Activated B cell treated with CpG ODN at 0.5 μM for 24 hours (primary cell): ENCODE measurements at regions of chr3 and their contacts with region 1.

Region 1: GRCh38 chr3:196287440-196288148 is at the start of gene PCYT1A:
- DNase-seq: peak; percentile 68
- ATAC-seq: peak; percentile 78
- H3K4me3 Mint-ChIP-seq: peak within 1 kb of the TSS; percentile 98
- H3K27ac Mint-ChIP-seq: peak within 1 kb of the TSS; percentile 97
- H3K4me1 Mint-ChIP-seq: peaks cover 66% of the 10 kb centered on the region
- H3K27me3 Mint-ChIP-seq: no peaks in the 10 kb centered on the region
- CTCF ChIP-seq: no peak
- total RNA-seq, gene PCYT1A: 54.6 and 58.8 TPM in 2 replicates

Region 2: GRCh38 chr3:194617827-194618226 is 1669.8 kb before region 1 on chr3:
- CTCF ChIA-PET with region 1: no interaction called
- POLR2A ChIA-PET with region 1: no interaction called
- intact Hi-C with region 1: no loop called
- DNase-seq: no peak
- ATAC-seq: peak; percentile 31
- H3K4me3 Mint-ChIP-seq: no peak overlapping the region
- H3K27ac Mint-ChIP-seq: peak overlapping the region; percentile 12
- H3K4me1 Mint-ChIP-seq: no peaks in the 10 kb centered on the region
- H3K27me3 Mint-ChIP-seq: no peaks in the 10 kb centered on the region
- CTCF ChIP-seq: no peak

Region 3: GRCh38 chr3:196432137-196432879 is 144.7 kb after region 1 on chr3 and contains the start of gene UBXN7:
- CTCF ChIA-PET with region 1: no interaction called
- POLR2A ChIA-PET with region 1: no interaction called
- intact Hi-C with region 1: loop called (anchors 1 kb)
- DNase-seq: peak; percentile 92
- ATAC-seq: peak; percentile 81
- H3K4me3 Mint-ChIP-seq: peak within 1 kb of the TSS; percentile 96
- H3K27ac Mint-ChIP-seq: peak within 1 kb of the TSS; percentile 80
- H3K4me1 Mint-ChIP-seq: peaks cover 22% of the 10 kb centered on the region
- H3K27me3 Mint-ChIP-seq: no peaks in the 10 kb centered on the region
- CTCF ChIP-seq: no peak
- total RNA-seq, gene UBXN7: 60.8 and 66.5 TPM in 2 replicates